ENCODE measurements at regions of chr16 and their contacts with region 1.

Region 1: GRCh38 chr16:2474877-2475412 is at the start of gene TBC1D24:
- DNase-seq: peak; percentile 90
- H3K4me3 ChIP-seq: peak within 1 kb of the TSS; percentile 65 to 90 (median 70)
- H3K27ac ChIP-seq: peak within 1 kb of the TSS; percentile 85 to 88 (median 88)
- H3K4me1 ChIP-seq: peaks cover 15 to 40% (median 33%) of the 10 kb centered on the region in 4 donors
- H3K27me3 ChIP-seq: peaks cover 37% of the 10 kb centered on the region
- CTCF ChIP-seq: no peak
- EP300 ChIP-seq: no peak
- POLR2A ChIP-seq: peak; percentile 46
- total RNA-seq, gene TBC1D24: 8.3 to 19.3 (median 11.6) TPM

Region 2: DNA sequence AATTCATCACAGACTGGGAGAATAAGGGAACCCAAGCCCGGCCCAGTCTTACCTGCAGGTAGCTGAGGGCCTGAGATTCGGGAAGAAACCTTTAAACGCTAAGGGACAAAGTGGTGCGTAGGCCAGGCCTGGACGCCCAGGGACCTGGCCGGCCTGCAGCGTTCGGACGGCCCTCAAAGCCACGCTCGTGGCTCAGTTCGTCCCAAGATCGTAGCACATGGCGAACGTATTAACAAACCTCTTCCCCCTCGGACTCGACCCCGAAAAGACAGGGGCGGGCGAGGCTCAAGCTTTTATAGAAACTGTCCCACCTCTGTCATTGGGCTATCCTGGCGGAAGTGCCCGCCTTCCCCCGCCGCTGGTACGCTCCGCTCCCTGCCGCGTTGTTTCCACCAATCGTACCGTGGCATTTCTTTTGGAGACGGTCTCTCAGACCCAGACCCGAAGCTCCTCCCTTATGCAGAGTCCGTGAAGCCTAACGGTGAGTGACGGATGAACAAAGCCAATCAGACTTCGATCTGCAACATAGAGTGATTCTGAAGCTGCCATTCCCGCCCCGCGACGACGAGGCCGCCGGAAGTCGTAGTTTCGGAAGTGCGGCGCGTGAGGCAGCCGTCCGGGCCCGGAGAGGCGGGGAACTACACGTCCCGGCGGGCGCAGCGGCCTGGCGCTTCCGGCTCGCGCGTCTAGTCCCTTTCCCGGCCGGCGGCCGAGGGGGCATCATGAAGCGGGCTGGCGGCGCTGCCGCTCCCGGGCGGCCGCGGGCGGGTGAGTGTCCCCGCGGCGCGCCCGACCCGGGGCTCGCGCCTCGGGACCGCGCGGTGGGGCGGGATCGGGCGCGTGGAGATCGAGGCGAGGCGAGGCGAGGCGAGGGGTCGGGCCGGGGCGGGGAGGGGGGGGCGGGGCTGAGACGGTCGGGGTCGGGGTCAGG is 319.6 kb before region 1 on chr16 and contains the start of gene TRAF7:
- in situ Hi-C with region 1: loop called in 1 of 4 experiments (anchors 25 kb)
- intact Hi-C with region 1: no loop called
- DNase-seq: peak; percentile 98
- H3K4me3 ChIP-seq: peak within 1 kb of the TSS; percentile 70 to 89 (median 78)
- H3K27ac ChIP-seq: peak within 1 kb of the TSS; percentile 87 to 94 (median 92)
- H3K4me1 ChIP-seq: peaks cover 67 to 86% (median 82%) of the 10 kb centered on the region in 4 donors
- H3K27me3 ChIP-seq: no peaks in the 10 kb centered on the region
- CTCF ChIP-seq: no peak
- EP300 ChIP-seq: no peak
- POLR2A ChIP-seq: peak; percentile 100
- total RNA-seq, gene TRAF7: 43.4 to 80.4 (median 63.0) TPM

Region 3: DNA sequence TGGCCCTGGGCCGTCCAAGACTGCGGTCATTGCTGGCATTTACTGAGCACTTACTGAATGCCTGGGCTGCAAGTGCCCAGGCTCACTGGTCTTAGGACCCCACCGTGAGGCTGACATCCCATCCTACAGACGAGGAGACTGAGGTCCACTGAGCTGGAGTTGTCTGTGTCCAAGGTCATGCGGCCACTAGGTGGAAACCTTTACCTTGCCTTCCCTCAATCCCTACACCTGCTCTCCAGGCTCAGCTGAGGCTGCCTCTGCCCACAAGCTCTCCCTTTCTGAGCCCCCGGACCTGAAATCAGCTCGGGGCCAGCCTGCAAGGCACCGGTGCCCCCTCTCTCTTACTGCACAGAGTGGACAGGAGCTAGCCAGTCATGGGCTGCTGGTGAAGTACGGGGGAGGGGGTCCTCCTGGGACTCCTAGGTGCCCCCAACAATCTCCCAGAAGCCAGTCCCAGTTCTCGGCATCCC is 280.1 kb before region 1 on chr16:
- in situ Hi-C with region 1: loop called in 1 of 4 experiments (anchors 25 kb)
- intact Hi-C with region 1: no loop called
- DNase-seq: peak; percentile 67
- H3K4me3 ChIP-seq: no peak overlapping the region
- H3K27ac ChIP-seq: no peak overlapping the region
- H3K4me1 ChIP-seq: peaks cover 10 to 18% (median 15%) of the 10 kb centered on the region in 4 donors
- H3K27me3 ChIP-seq: peaks cover 61% of the 10 kb centered on the region
- CTCF ChIP-seq: peak; percentile 44 to 76 (median 51)
- EP300 ChIP-seq: no peak
- POLR2A ChIP-seq: no peak

Region 4: DNA sequence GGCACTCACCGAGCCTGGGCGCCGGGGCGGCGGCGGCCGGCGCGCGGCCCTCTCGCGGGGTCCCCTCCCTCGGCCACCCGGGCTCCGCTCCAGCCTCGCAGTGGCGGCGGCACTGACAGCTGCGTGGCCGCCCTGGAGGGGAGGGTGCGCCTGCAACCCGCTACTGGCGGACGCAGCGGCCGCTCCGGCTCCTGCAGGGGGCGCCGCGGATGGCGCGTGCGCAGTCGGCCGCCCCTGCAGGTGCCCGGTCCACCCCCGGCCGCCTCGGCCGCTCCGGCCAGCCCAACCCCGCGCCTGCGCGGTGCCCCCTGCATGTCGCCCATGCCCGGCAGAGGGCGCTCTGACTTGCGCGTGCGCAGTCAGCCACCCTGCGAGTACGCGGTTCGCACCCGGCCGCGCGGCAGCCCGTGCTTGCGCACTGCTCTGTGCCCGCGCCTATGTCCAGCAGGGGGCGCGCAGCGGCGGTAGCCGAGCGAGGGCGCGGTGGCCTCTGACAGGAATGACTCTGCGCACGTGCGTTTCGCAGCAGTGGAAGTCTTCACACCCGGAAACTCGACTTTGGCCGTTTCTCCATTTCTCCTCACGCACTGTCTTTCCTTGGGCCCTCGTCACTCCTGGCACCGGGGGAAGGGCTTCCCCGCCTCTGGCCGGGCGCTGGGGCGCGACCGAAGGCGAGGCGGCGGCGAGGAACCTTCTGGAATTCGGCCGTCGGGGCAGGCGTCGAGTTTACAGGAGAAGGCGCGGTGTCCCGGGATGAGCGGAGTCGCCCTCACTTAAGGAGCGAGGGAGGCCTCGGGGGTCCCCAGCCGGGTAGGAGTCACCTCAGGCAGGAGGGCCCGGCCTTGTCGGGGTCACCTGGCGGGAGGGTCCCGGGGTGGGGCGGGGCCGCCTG is 134.1 kb before region 1 on chr16 and contains the start of gene ABCA3:
- in situ Hi-C with region 1: loop called in 2 of 4 experiments (anchors 25 kb)
- intact Hi-C with region 1: no loop called
- DNase-seq: peak; percentile 95
- H3K4me3 ChIP-seq: peak within 1 kb of the TSS; percentile 47 to 67 (median 62)
- H3K27ac ChIP-seq: peak within 1 kb of the TSS; percentile 8 to 78 (median 64)
- H3K4me1 ChIP-seq: peaks cover 0 to 23% (median 14%) of the 10 kb centered on the region in 4 donors
- H3K27me3 ChIP-seq: peaks cover 47% of the 10 kb centered on the region
- CTCF ChIP-seq: peak; percentile 98 to 100 (median 99)
- EP300 ChIP-seq: no peak
- POLR2A ChIP-seq: no peak
- total RNA-seq, gene ABCA3: 3.4 to 8.6 (median 3.7) TPM

Region 5: DNA sequence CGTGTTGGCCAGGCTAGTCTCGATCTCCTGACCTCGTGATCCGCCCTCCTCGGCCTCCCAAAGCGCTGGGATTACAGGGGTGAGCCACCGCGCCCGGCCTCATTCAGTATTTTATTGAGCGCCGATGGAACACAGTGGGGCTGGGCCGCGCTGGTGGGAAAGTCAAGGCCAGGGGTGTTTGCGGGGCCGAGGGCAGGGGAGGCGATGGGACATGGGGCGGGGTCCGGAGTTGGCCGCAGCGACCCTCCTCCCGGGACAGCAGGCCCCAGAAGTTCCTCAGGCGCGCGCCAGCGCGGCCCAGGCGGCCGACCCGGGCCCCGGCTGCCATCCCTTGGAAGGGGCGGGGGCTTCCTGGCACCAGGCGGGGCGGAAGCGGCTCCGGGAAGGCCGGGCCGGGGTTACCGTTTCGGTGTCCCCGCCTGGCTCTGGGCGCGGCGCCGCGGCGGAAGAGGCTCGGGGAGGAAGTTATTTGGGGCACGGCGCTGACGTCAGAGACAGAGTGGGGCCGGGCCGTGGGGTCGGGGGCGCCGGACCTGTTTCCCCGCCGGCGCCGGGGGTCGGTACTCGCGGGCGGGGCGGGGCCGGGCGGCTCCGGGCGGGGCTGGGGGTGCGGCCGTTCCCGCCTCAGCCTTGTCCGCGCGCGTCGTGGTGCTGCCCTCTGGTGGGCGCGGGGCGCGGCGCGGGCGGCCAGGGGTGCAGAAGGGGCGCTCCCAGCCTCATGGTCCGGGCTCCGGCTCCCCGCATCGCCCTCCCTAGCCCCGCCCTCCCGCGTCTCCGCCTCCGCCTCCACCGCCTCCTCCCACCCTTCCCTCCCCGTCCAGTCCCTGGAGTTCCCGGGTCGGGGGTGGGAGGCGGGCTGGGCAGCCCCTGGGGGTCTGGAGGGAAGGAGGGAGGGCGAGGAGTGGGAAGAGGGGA is 246.0 kb after region 1 on chr16:
- in situ Hi-C with region 1: no loop called
- intact Hi-C with region 1: no loop called
- DNase-seq: peak; percentile 90
- H3K4me3 ChIP-seq: peak overlapping the region; percentile 47 to 73 (median 62)
- H3K27ac ChIP-seq: peak overlapping the region; percentile 79 to 90 (median 86)
- H3K4me1 ChIP-seq: peaks cover 4 to 27% (median 21%) of the 10 kb centered on the region in 4 donors
- H3K27me3 ChIP-seq: peaks cover 13% of the 10 kb centered on the region
- CTCF ChIP-seq: peak in 4 of 5 experiments; percentile 37 to 82 (median 75)
- EP300 ChIP-seq: no peak
- POLR2A ChIP-seq: peak; percentile 38

Measured in transverse colon (tissue), 4 donors.